ENCODE measurements at regions of chr7 and their contacts with region 1.

Region 1: GRCh38 chr7:16695621-16696237 is 49.7 kb downstream of the BZW2 start:
- DNase-seq: peak; percentile 80
- ATAC-seq: peak; percentile 69
- H3K4me3 ChIP-seq: no peak overlapping the region
- H3K27ac ChIP-seq: no peak overlapping the region
- H3K4me1 ChIP-seq: peaks cover 32% of the 10 kb centered on the region
- H3K27me3 ChIP-seq: no peaks in the 10 kb centered on the region
- CTCF ChIP-seq: peak; percentile 74

Region 2: DNA sequence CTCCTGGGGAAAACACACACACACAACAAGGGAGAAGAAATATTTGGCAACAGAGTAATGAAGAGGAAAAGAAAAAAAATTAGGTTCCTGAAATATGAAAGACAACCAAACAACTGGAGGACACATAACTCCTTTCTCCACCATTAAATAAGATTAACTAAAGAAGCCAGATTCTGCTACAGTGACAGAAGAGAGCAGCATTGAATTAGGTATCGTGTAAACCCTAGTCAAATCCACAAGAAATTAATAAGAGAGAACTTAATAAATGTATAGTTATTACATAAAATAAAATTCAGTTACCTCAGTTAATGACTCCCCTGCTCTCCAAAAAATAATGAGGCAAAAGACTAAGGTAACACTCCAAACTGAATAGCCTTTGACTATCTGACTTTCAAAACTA is 581.1 kb before region 1 on chr7:
- CTCF ChIA-PET with region 1: no interaction called
- POLR2A ChIA-PET with region 1: no interaction called
- intact Hi-C with region 1: loop called (anchors 10 kb)
- DNase-seq: peak; percentile 51
- ATAC-seq: peak; percentile 59
- H3K4me3 ChIP-seq: no peak overlapping the region
- H3K27ac ChIP-seq: no peak overlapping the region
- H3K4me1 ChIP-seq: no peaks in the 10 kb centered on the region
- H3K27me3 ChIP-seq: no peaks in the 10 kb centered on the region
- CTCF ChIP-seq: peak; percentile 71

Region 3: DNA sequence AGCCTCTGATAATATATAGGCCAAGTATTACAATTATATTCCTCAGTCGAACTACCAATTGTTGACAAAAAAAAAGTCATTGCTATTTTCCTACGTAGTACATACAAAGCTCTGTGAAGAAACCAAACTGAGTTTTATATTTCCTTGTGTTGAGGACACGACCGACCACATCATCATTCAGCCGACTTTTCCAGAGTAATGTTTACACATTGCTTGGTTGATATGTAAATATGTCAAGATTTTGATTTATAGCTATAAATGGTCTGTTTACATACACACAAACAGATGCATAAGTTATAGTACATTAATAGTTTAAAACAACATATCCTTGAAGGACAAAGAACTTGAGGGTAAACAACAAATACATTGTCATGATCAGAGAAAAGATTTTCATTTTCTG is 395.9 kb before region 1 on chr7:
- CTCF ChIA-PET with region 1: no interaction called
- POLR2A ChIA-PET with region 1: no interaction called
- intact Hi-C with region 1: no loop called
- DNase-seq: peak; percentile 29
- ATAC-seq: peak; percentile 64
- H3K4me3 ChIP-seq: no peak overlapping the region
- H3K27ac ChIP-seq: no peak overlapping the region
- H3K4me1 ChIP-seq: peaks cover 6% of the 10 kb centered on the region; the same call in 1 of the 2 replicates
- H3K27me3 ChIP-seq: no peaks in the 10 kb centered on the region
- CTCF ChIP-seq: no peak

Region 4: DNA sequence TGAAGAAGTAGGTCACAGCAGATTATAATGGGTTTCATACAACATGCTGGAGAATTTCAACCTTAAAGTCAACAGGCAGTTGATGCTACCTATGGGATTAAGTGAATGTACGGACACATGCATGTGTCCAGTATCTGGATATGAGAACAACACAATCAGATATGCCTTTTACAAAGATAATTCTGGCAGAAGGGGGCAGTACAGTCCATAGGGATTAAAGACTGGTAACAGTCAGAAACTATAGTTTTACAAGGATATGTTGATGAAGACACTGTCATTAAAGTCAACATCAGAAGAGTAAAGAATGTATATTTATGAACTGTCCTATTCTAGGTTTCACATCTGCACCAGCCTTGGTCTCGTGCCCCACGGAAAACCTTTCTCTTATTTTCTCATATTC is 91.7 kb before region 1 on chr7:
- CTCF ChIA-PET with region 1: no interaction called
- POLR2A ChIA-PET with region 1: interaction called, 4 read pairs
- intact Hi-C with region 1: loop called (anchors 5 kb)
- DNase-seq: peak; percentile 48
- ATAC-seq: peak; percentile 49
- H3K4me3 ChIP-seq: no peak overlapping the region
- H3K27ac ChIP-seq: no peak overlapping the region
- H3K4me1 ChIP-seq: peaks cover 9% of the 10 kb centered on the region
- H3K27me3 ChIP-seq: no peaks in the 10 kb centered on the region
- CTCF ChIP-seq: peak; percentile 52